HAP-1 (cell line): ENCODE measurements at regions of chr20 and their contacts with region 1.

Region 1: GRCh38 chr20:33963751-33964150 is 30.0 kb upstream of the RALY start:
- DNase-seq: no peak
- H3K4me3 ChIP-seq: no peak overlapping the region
- H3K4me1 ChIP-seq: no peaks in the 10 kb centered on the region
- H3K27me3 ChIP-seq: no peaks in the 10 kb centered on the region

Region 2: DNA sequence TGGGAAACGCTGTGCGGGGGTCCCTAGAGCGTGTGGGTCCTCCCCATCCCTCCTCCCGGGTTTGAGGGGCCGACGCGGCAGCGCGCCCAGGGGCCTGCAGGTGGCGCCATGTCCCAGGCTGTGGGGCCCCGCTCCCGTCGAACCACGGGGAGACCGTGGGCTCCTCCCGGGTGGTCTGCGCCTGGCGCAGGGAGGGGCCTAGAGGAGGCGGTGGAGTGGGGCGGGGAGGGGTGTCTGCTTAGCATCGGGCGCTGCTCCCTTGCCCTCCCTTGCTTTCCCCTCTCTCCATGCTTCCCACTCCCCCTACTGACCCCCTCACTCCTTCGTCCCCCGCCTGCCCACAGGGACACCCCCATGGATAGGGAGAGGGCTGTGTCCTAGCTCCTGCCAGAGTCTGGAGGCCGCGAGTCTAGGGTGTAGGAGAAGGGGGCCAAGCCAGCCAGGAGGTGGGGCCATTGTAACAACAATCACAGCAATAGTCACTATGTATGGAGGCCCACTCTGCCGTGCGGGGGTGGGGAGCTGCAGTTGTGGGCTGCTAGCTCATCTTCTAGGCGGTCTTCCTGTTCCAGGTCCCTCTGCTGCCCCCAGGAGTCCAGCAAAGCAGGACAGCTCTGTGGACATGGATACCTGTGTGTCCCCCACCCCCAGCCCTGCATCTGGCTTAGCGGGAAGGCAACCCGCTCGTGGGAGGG is 100.9 kb before region 1 on chr20:
- in situ Hi-C with region 1: no loop called
- DNase-seq: peak; percentile 30 to 80
- H3K4me3 ChIP-seq: peak overlapping the region; percentile 12; the same call in 1 of the 2 replicates
- H3K4me1 ChIP-seq: peaks cover 2% of the 10 kb centered on the region; the same call in 1 of the 2 replicates
- H3K27me3 ChIP-seq: no peaks in the 10 kb centered on the region

Region 3: GRCh38 chr20:33909331-33909921 is 54.3 kb before region 1 on chr20:
- in situ Hi-C with region 1: loop called (anchors 10 kb)
- DNase-seq: peak; percentile 68 to 84
- H3K4me3 ChIP-seq: no peak overlapping the region
- H3K4me1 ChIP-seq: peaks cover 24% of the 10 kb centered on the region
- H3K27me3 ChIP-seq: no peaks in the 10 kb centered on the region

Region 4: DNA sequence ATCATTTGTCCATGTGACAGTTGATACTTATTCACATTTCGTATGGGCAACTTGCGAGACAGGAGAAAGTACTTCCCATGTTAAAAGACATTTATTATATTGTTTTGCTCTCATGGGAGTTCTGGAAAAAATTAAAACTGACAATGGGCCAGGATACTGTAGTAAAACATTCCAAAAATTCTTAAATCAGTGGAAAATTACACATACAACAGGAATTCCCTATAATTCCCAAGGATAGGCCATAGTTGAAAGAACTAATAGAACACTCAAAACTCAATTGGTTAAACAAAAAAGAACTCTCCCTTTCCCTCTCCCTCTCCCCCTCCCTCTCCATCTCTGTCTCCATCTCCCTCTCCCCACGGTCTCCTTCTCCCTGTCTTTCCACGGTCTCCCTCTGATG is 167.7 kb after region 1 on chr20:
- in situ Hi-C with region 1: no loop called
- DNase-seq: no peak
- H3K4me3 ChIP-seq: no peak overlapping the region
- H3K4me1 ChIP-seq: peaks cover 2% of the 10 kb centered on the region; the same call in 1 of the 2 replicates
- H3K27me3 ChIP-seq: no peaks in the 10 kb centered on the region